H1 (cell line): ENCODE measurements at regions of chr3 and their contacts with region 1.

Region 1: GRCh38 chr3:94249585-94249984 is 186.7 kb downstream of the NSUN3 start:
- DNase-seq: peak; percentile 34 to 88
- H3K4me3 ChIP-seq: no peak overlapping the region
- H3K27ac ChIP-seq: no peak overlapping the region
- H3K4me1 ChIP-seq: no peaks in the 10 kb centered on the region; a peak in 1 of 7 replicates
- H3K27me3 ChIP-seq: no peaks in the 10 kb centered on the region
- CTCF ChIP-seq: peak; percentile 62 to 86 (median 69)
- EP300 ChIP-seq: no peak
- POLR2A ChIP-seq: no peak
- RAD21 ChIP-seq: peak; percentile 90 to 91

Region 2: DNA sequence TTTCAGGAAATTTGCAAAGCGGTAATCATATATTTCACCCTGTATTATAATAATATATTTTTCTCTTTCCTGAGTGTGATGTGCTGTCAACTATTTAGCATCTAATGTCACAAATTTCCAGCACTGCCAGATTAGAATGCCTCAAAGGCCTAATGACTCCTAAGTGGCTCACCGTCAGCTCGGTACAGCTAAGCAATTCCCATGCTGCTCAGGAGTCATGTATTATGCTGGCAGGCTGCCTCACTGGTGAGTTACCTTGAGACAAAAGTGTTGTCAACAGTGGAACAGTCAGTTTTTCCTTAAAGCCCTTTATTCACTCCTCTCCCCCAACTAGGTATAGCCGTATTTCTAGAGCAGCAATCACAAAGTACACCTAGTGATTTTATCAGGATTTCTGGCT is 103.1 kb before region 1 on chr3:
- CTCF ChIA-PET with region 1: no interaction called
- POLR2A ChIA-PET with region 1: no interaction called
- DNase-seq: no peak
- H3K4me3 ChIP-seq: no peak overlapping the region
- H3K27ac ChIP-seq: no peak overlapping the region
- H3K4me1 ChIP-seq: peaks cover 0 to 4% (median 4%) of the 10 kb centered on the region in 4 experiments; a peak in 4 of 7 replicates
- H3K27me3 ChIP-seq: no peaks in the 10 kb centered on the region
- CTCF ChIP-seq: no peak
- EP300 ChIP-seq: no peak
- POLR2A ChIP-seq: no peak
- RAD21 ChIP-seq: no peak

Region 3: GRCh38 chr3:94220426-94220825 is 29.2 kb before region 1 on chr3:
- CTCF ChIA-PET with region 1: no interaction called
- POLR2A ChIA-PET with region 1: no interaction called
- DNase-seq: no peak
- H3K4me3 ChIP-seq: no peak overlapping the region
- H3K27ac ChIP-seq: no peak overlapping the region
- H3K4me1 ChIP-seq: no peaks in the 10 kb centered on the region
- H3K27me3 ChIP-seq: no peaks in the 10 kb centered on the region
- CTCF ChIP-seq: no peak
- EP300 ChIP-seq: no peak
- POLR2A ChIP-seq: no peak
- RAD21 ChIP-seq: no peak

Region 4: GRCh38 chr3:94234177-94234788 is 15.3 kb before region 1 on chr3:
- CTCF ChIA-PET with region 1: interaction called, 24 read pairs
- POLR2A ChIA-PET with region 1: no interaction called
- DNase-seq: no peak
- H3K4me3 ChIP-seq: no peak overlapping the region
- H3K27ac ChIP-seq: no peak overlapping the region
- H3K4me1 ChIP-seq: no peaks in the 10 kb centered on the region
- H3K27me3 ChIP-seq: no peaks in the 10 kb centered on the region
- CTCF ChIP-seq: peak in 2 of 3 experiments; percentile 42 to 74; a peak in 3 of 4 replicates
- EP300 ChIP-seq: no peak
- POLR2A ChIP-seq: no peak
- RAD21 ChIP-seq: peak; percentile 73

Region 5: GRCh38 chr3:94303897-94304296 is 54.3 kb after region 1 on chr3:
- CTCF ChIA-PET with region 1: interaction called, 12 read pairs
- POLR2A ChIA-PET with region 1: no interaction called
- DNase-seq: no peak
- H3K4me3 ChIP-seq: no peak overlapping the region
- H3K27ac ChIP-seq: no peak overlapping the region
- H3K4me1 ChIP-seq: peaks cover 0 to 8% (median 4%) of the 10 kb centered on the region in 4 experiments; a peak in 3 of 7 replicates
- H3K27me3 ChIP-seq: no peaks in the 10 kb centered on the region
- CTCF ChIP-seq: peak in 1 of 3 experiments; percentile 7; a peak in 1 of 4 replicates
- EP300 ChIP-seq: no peak
- POLR2A ChIP-seq: no peak
- RAD21 ChIP-seq: peak; percentile 15 to 28; a peak in 1 of 4 replicates

Region 6: DNA sequence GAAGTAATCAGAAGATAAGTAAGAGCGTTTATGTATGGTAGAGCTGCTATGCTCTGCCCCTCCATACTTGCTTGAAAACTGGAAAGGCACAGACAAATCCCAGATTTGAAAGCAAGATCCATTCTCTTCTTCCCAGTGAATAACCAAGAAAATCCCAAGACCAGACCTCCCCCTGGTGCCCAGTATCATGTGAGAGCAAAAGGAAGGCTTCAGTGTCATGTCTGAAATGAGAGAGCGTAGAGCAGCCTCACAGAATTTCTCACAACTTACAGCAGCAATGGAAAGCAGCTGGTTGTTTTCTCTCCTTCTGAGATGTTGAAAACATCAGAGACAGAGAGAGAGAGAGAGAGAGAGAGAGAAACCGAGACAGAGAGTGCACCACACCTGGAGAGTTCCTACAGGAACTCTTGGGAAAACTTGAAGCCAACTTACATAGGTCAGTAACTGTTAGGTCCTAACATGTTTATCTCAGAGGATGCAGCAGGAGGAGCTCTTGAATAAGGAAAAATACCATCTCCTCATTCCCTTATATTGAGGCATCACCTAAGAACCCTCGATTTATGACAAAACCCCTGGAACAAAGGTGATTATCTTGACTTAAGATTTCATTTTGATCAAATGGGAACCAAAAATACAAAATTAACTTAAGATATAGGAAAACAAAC is 86.6 kb after region 1 on chr3:
- CTCF ChIA-PET with region 1: interaction called, 22 read pairs
- POLR2A ChIA-PET with region 1: no interaction called
- DNase-seq: no peak
- H3K4me3 ChIP-seq: no peak overlapping the region
- H3K27ac ChIP-seq: no peak overlapping the region
- H3K4me1 ChIP-seq: no peaks in the 10 kb centered on the region
- H3K27me3 ChIP-seq: no peaks in the 10 kb centered on the region
- CTCF ChIP-seq: peak in 2 of 3 experiments; percentile 40 to 74; a peak in 2 of 4 replicates
- EP300 ChIP-seq: no peak
- POLR2A ChIP-seq: no peak
- RAD21 ChIP-seq: peak; percentile 89 to 91